Uterus (tissue), 4 donors: ENCODE measurements at regions of chr17 and their contacts with region 1.

Region 1: DNA sequence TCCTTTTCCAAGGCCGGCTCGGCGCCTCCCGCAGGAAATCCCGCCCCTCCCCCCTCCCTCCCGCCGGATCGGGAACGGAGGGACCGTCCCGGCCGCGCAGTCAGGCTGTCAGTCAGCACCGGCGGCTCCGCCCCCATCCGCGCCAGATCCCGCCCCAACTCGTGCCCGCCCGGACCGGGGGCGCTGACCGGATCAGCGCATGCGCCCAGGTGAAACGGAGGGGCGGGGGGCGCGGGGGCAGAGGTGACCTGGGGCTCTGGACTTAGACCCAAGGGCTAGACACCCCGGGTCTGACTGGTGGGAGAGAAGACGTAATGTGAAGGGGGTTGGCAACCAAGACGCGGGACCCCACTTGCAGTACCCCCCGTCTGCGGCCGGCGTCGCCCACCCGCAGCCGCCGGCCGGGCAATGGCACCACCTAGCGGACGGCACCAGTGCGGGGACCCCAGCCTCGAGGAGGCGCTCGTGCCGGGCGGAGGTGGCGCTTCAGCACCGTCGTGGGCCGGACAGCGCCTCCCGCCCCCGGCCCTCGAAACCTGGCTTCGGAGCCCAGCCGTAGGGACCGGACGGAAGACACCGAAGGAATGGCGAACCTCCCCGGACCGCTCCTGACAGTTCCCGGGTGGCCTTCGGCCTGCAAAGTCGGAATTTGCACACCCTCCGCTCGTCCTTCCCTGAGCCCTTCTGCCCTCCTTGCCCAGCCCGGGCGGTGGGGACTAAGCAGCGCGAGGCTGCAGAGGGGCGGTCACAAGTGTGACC is at the start of gene CASKIN2:
- DNase-seq: peak; percentile 97 to 98
- H3K4me3 ChIP-seq: peak within 1 kb of the TSS; percentile 66 to 85
- H3K27ac ChIP-seq: peak within 1 kb of the TSS; percentile 91 to 93
- H3K4me1 ChIP-seq: peaks cover 7 to 22% of the 10 kb centered on the region in 2 donors
- H3K27me3 ChIP-seq: no peaks in the 10 kb centered on the region
- CTCF ChIP-seq: peak; percentile 95 to 100 (median 98)
- POLR2A ChIP-seq: no peak
- total RNA-seq, gene CASKIN2: 7.4 to 122 (median 15.5) TPM

Region 2: DNA sequence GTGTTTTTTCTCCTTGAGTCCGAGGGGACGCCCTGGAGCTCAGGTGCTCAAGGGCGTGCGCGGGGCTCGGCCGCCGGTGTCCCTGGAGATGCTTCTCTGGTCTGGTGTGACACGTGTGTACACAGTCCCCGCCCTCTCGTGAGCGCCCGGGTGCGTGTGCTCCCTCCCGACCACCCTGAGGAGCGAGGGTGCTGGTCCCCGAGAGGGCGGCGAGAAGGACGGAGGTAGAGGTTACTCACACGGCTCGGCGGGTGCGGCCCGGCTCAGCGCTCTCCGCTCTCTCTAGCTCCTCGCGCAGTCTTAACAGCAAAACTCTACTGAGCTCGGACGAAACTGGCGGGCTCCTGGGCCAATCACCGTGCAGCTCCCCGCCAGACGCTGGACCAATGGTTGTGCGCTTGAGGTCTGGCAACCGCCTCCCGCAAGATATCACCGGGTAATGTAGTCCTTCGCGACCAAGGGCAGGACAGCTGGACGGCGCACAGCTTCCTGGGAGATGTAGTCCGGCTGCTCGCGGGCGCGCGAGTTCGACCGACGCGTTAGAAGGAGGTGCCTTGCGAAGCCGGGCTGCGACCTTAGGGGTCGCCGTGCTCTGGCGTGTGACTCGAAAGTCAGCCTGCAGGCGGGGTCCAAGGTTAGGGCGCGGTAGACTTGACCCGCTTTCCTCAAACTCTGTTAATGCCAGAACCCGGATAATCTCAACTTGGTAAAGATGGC is 226.4 kb before region 1 on chr17 and contains the start of gene SLC25A19:
- intact Hi-C with region 1: loop called (anchors 5 kb)
- DNase-seq: peak; percentile 98
- H3K4me3 ChIP-seq: peak within 1 kb of the TSS; percentile 76 to 84
- H3K27ac ChIP-seq: peak within 1 kb of the TSS; percentile 95 to 97
- H3K4me1 ChIP-seq: no peaks in the 10 kb centered on the region
- H3K27me3 ChIP-seq: no peaks in the 10 kb centered on the region
- CTCF ChIP-seq: peak in 3 of 4 experiments; percentile 6 to 43 (median 8)
- POLR2A ChIP-seq: peak; percentile 93 to 97
- total RNA-seq, gene SLC25A19: 4.7 to 59.9 (median 10.1) TPM

Region 3: GRCh38 chr17:75313941-75314551 is 201.6 kb before region 1 on chr17:
- intact Hi-C with region 1: no loop called
- DNase-seq: no peak
- H3K4me3 ChIP-seq: no peak overlapping the region
- H3K27ac ChIP-seq: no peak overlapping the region
- H3K4me1 ChIP-seq: no peaks in the 10 kb centered on the region
- H3K27me3 ChIP-seq: no peaks in the 10 kb centered on the region
- CTCF ChIP-seq: no peak
- POLR2A ChIP-seq: no peak

Region 4: GRCh38 chr17:75352079-75352569 is 163.6 kb before region 1 on chr17:
- intact Hi-C with region 1: no loop called
- DNase-seq: no peak
- H3K4me3 ChIP-seq: no peak overlapping the region
- H3K27ac ChIP-seq: no peak overlapping the region
- H3K4me1 ChIP-seq: peaks cover 0 to 5% of the 10 kb centered on the region in 2 donors
- H3K27me3 ChIP-seq: no peaks in the 10 kb centered on the region
- CTCF ChIP-seq: no peak
- POLR2A ChIP-seq: no peak

Region 5: DNA sequence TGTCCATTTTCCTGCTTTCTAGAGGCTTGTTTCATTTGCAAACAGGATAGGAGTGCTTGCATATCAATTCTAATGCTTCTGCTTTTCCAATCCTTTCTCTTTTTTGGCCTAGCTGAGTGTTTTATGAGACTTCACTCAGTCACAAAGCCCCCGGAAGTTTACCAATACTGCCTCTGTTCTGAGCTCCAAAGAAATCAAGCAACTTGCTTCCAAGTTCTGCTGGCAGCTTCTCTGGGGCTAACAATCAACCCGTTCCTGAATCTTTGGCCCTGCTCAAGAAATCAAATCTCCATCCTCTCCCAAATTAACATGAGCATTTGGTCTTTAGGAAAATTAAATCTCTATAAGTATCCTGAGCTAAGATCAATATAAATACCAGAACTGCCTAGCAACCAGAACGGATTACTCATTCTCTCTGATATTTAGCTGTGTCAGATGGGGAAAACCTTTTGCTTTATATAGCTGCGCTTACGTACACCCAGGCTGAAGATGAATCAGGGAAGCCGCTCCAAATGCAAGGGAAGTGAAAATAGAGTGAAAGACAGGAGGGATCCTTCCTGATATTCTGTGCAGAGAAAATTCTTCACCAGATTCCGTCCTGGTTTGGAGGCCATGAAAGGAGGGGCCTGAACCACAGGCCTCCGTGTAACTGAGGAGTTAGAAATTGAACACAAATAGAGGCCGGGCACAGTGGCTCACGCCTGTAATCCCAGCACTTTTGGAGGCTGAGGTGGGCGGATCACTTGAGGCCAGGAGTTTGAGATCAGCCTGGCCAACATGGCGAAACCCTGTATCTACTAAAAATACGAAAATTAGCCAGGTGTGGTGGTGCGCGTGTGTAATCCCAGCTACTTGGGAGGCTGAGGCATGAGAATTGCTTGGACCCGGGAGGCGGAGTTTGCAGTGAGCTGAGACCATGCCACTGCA is 86.9 kb before region 1 on chr17:
- intact Hi-C with region 1: loop called (anchors 5 kb)
- DNase-seq: peak in 1 of 2 donors; percentile 24
- H3K4me3 ChIP-seq: no peak overlapping the region
- H3K27ac ChIP-seq: peak overlapping the region; percentile 3 to 54
- H3K4me1 ChIP-seq: no peaks in the 10 kb centered on the region
- H3K27me3 ChIP-seq: no peaks in the 10 kb centered on the region
- CTCF ChIP-seq: no peak
- POLR2A ChIP-seq: no peak

Region 6: GRCh38 chr17:75440738-75441448 is 74.8 kb before region 1 on chr17:
- intact Hi-C with region 1: no loop called
- DNase-seq: no peak
- H3K4me3 ChIP-seq: no peak overlapping the region
- H3K27ac ChIP-seq: peak overlapping the region; percentile 43 to 58
- H3K4me1 ChIP-seq: no peaks in the 10 kb centered on the region
- H3K27me3 ChIP-seq: no peaks in the 10 kb centered on the region
- CTCF ChIP-seq: no peak
- POLR2A ChIP-seq: no peak